IMR-90 (cell line): ENCODE measurements at regions of chr3 and their contacts with region 1.

Region 1: GRCh38 chr3:55485211-55485791 is 1.8 kb downstream of the WNT5A start:
- DNase-seq: peak; percentile 88
- ATAC-seq: peak; percentile 40
- H3K4me3 ChIP-seq: peak overlapping the region; percentile 89
- H3K27ac ChIP-seq: peak overlapping the region; percentile 98
- H3K4me1 ChIP-seq: peaks cover 14% of the 10 kb centered on the region
- H3K27me3 ChIP-seq: no peaks in the 10 kb centered on the region
- CTCF ChIP-seq: peak; percentile 66
- POLR2A ChIP-seq: no peak; the same call in 1 of the 2 replicates
- RAD21 ChIP-seq: peak; percentile 77

Region 2: GRCh38 chr3:54870423-54870822 is 614.9 kb before region 1 on chr3:
- CTCF ChIA-PET with region 1: no interaction called
- POLR2A ChIA-PET with region 1: no interaction called
- dilution Hi-C with region 1: no loop called
- in situ Hi-C with region 1: no loop called
- intact Hi-C with region 1: loop called (anchors 1 kb)
- DNase-seq: peak; percentile 97
- ATAC-seq: peak; percentile 98
- H3K4me3 ChIP-seq: no peak overlapping the region
- H3K27ac ChIP-seq: peak overlapping the region; percentile 70
- H3K4me1 ChIP-seq: peaks cover 3% of the 10 kb centered on the region
- H3K27me3 ChIP-seq: no peaks in the 10 kb centered on the region
- CTCF ChIP-seq: peak; percentile 88
- POLR2A ChIP-seq: peak; percentile 40; the same call in 1 of the 2 replicates
- RAD21 ChIP-seq: peak; percentile 92

Region 3: GRCh38 chr3:55169608-55170010 is 315.7 kb before region 1 on chr3:
- CTCF ChIA-PET with region 1: no interaction called
- POLR2A ChIA-PET with region 1: interaction called, 20 read pairs
- dilution Hi-C with region 1: no loop called
- in situ Hi-C with region 1: loop called (anchors 5 kb)
- intact Hi-C with region 1: loop called (anchors 2 kb)
- DNase-seq: peak; percentile 100
- ATAC-seq: peak; percentile 60
- H3K4me3 ChIP-seq: no peak overlapping the region
- H3K27ac ChIP-seq: peak overlapping the region; percentile 98; the same call in 1 of the 2 replicates
- H3K4me1 ChIP-seq: peaks cover 35% of the 10 kb centered on the region
- H3K27me3 ChIP-seq: no peaks in the 10 kb centered on the region
- CTCF ChIP-seq: no peak
- POLR2A ChIP-seq: no peak
- RAD21 ChIP-seq: 0 out of 2 replicates have a peak, but pooled peaks have one; percentile 24

Region 4: DNA sequence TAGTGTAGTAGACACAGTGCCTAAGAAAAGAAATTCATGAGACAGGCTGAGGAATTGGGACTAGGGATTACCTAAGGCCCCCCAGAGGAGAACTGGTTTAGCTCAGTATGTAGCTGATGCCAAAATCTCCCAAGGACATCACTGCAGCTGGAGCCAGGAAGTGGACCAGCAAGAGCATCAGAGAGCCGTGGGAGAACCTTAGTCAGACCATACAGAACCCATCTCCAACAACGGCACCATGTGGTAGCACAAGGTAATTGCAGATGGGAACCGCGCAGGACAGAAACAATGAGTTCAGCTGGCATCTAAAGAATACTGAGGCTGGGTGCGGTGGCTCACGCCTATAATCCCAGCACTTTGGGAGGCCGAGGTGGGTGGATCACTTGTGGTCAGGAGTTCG is 79.9 kb before region 1 on chr3:
- CTCF ChIA-PET with region 1: no interaction called
- POLR2A ChIA-PET with region 1: no interaction called
- dilution Hi-C with region 1: no loop called
- in situ Hi-C with region 1: no loop called
- intact Hi-C with region 1: no loop called
- DNase-seq: peak; percentile 12
- ATAC-seq: no peak
- H3K4me3 ChIP-seq: no peak overlapping the region
- H3K27ac ChIP-seq: no peak overlapping the region
- H3K4me1 ChIP-seq: peaks cover 6% of the 10 kb centered on the region; the same call in 1 of the 2 replicates
- H3K27me3 ChIP-seq: no peaks in the 10 kb centered on the region
- CTCF ChIP-seq: 0 out of 2 replicates have a peak, but pooled peaks have one; percentile 18
- POLR2A ChIP-seq: no peak
- RAD21 ChIP-seq: no peak; the same call in 1 of the 2 replicates

Region 5: GRCh38 chr3:55704521-55704920 is 219.2 kb after region 1 on chr3:
- CTCF ChIA-PET with region 1: interaction called, 3 read pairs
- POLR2A ChIA-PET with region 1: interaction called, 4 read pairs
- dilution Hi-C with region 1: no loop called
- in situ Hi-C with region 1: no loop called
- intact Hi-C with region 1: loop called (anchors 5 kb)
- DNase-seq: peak; percentile 78
- ATAC-seq: peak; percentile 55
- H3K4me3 ChIP-seq: no peak overlapping the region
- H3K27ac ChIP-seq: no peak overlapping the region
- H3K4me1 ChIP-seq: peaks cover 8% of the 10 kb centered on the region
- H3K27me3 ChIP-seq: 0 out of 2 replicates have a peak, but pooled peaks cover 2% of the 10 kb centered on the region
- CTCF ChIP-seq: no peak
- POLR2A ChIP-seq: no peak
- RAD21 ChIP-seq: no peak

Region 6: GRCh38 chr3:55897573-55898224 is 412.4 kb after region 1 on chr3:
- CTCF ChIA-PET with region 1: interaction called, 3 read pairs
- POLR2A ChIA-PET with region 1: interaction called, 3 read pairs
- dilution Hi-C with region 1: no loop called
- in situ Hi-C with region 1: loop called (anchors 10 kb)
- intact Hi-C with region 1: loop called (anchors 1 kb)
- DNase-seq: peak; percentile 21
- ATAC-seq: peak; percentile 52; the same call in 1 of the 2 replicates
- H3K4me3 ChIP-seq: no peak overlapping the region
- H3K27ac ChIP-seq: no peak overlapping the region
- H3K4me1 ChIP-seq: peaks cover 6% of the 10 kb centered on the region
- H3K27me3 ChIP-seq: peaks cover 11% of the 10 kb centered on the region
- CTCF ChIP-seq: peak; percentile 58
- POLR2A ChIP-seq: no peak
- RAD21 ChIP-seq: peak; percentile 74

Region 7: DNA sequence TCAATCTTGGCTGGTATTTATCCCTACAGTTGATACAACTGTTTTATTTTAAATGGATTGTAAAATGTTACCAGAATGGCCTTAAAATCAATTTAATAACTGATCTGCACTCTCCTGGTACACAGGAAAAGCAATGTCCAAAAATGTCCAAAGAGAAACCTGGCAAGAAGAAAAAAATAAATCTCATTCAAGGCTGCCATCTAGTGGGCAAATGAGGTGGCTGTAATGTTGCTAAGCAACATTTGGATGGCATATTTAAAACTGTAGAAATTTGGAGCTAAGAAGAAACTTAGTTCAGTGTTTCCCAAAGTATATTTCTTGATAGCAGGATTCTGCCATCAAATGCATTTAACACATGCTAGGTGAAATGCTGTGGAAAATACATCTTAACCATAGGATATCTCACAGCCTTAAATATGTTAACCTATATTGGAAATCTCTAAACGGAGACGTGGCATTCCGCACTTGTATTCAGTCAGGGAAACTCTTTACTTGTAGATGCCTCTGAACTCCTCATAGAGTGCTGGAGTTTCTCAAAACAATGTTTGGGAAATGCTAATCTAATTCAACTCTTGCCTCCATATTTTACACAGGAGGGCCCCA is 766.1 kb after region 1 on chr3:
- CTCF ChIA-PET with region 1: no interaction called
- POLR2A ChIA-PET with region 1: no interaction called
- dilution Hi-C with region 1: no loop called
- in situ Hi-C with region 1: loop called (anchors 10 kb)
- intact Hi-C with region 1: loop called (anchors 1 kb)
- DNase-seq: peak; percentile 51
- ATAC-seq: peak; percentile 79
- H3K4me3 ChIP-seq: no peak overlapping the region
- H3K27ac ChIP-seq: no peak overlapping the region
- H3K4me1 ChIP-seq: no peaks in the 10 kb centered on the region
- H3K27me3 ChIP-seq: peaks cover 2% of the 10 kb centered on the region; the same call in 1 of the 2 replicates
- CTCF ChIP-seq: peak; percentile 79
- POLR2A ChIP-seq: no peak
- RAD21 ChIP-seq: peak; percentile 79